CD4-positive, alpha-beta memory T cell (primary cell): ENCODE measurements at regions of chr19 and their contacts with region 1.

Region 1: GRCh38 chr19:57410877-57411671 is at the start of gene ZNF17:
- DNase-seq: peak; percentile 85 to 95 (median 90)
- H3K4me3 ChIP-seq: peak within 1 kb of the TSS; percentile 49 to 90
- H3K4me3 Mint-ChIP-seq: peak within 1 kb of the TSS; percentile 92 to 97 (median 96)
- H3K27ac ChIP-seq: peak within 1 kb of the TSS; percentile 73
- H3K27ac Mint-ChIP-seq: peak within 1 kb of the TSS; percentile 79 to 95 (median 94)
- H3K4me1 ChIP-seq: peaks cover 16% of the 10 kb centered on the region
- H3K4me1 Mint-ChIP-seq: peaks cover 23 to 42% (median 29%) of the 10 kb centered on the region in 4 donors
- H3K27me3 ChIP-seq: no peaks in the 10 kb centered on the region
- H3K27me3 Mint-ChIP-seq: no peaks in the 10 kb centered on the region
- total RNA-seq, gene ZNF17: 28.3 to 29.9 TPM

Region 2: GRCh38 chr19:57191141-57192076 is 219.7 kb before region 1 on chr19 and contains the start of gene ZNF264:
- CTCF ChIA-PET with region 1: no interaction called
- POLR2A ChIA-PET with region 1: no interaction called
- intact Hi-C with region 1: no loop called
- DNase-seq: peak; percentile 88 to 90 (median 88)
- H3K4me3 ChIP-seq: peak within 1 kb of the TSS; percentile 57 to 73
- H3K4me3 Mint-ChIP-seq: peak within 1 kb of the TSS; percentile 91 to 94 (median 93)
- H3K27ac ChIP-seq: peak within 1 kb of the TSS; percentile 77
- H3K27ac Mint-ChIP-seq: peak within 1 kb of the TSS; percentile 94 to 98 (median 96)
- H3K4me1 ChIP-seq: peaks cover 23% of the 10 kb centered on the region
- H3K4me1 Mint-ChIP-seq: peaks cover 19 to 54% (median 36%) of the 10 kb centered on the region in 4 donors
- H3K27me3 ChIP-seq: no peaks in the 10 kb centered on the region
- H3K27me3 Mint-ChIP-seq: peaks cover 6 to 7% of the 10 kb centered on the region in 2 donors
- total RNA-seq, gene ZNF264: 62.5 to 64.1 TPM

Region 3: GRCh38 chr19:57362997-57363705 is 47.9 kb before region 1 on chr19 and contains the starts of genes TRAPPC2B and ZNF547:
- CTCF ChIA-PET with region 1: interaction called, 3 read pairs
- POLR2A ChIA-PET with region 1: no interaction called
- intact Hi-C with region 1: loop called (anchors 1 kb)
- DNase-seq: peak; percentile 97 to 99 (median 99)
- H3K4me3 ChIP-seq: peak within 1 kb of the TSS; percentile 51 to 70
- H3K4me3 Mint-ChIP-seq: peak within 1 kb of the TSS; percentile 92 to 97 (median 94)
- H3K27ac ChIP-seq: peak within 1 kb of the TSS; percentile 76
- H3K27ac Mint-ChIP-seq: peak within 1 kb of the TSS; percentile 97 to 99 (median 99)
- H3K4me1 ChIP-seq: peaks cover 12% of the 10 kb centered on the region
- H3K4me1 Mint-ChIP-seq: peaks cover 12 to 18% (median 16%) of the 10 kb centered on the region in 4 donors
- H3K27me3 ChIP-seq: no peaks in the 10 kb centered on the region
- H3K27me3 Mint-ChIP-seq: peaks cover 0 to 2% of the 10 kb centered on the region in 2 donors
- total RNA-seq, gene TRAPPC2B: 11.0 to 12.1 TPM
- total RNA-seq, gene ZNF547: 6.5 to 10.8 TPM

Region 4: DNA sequence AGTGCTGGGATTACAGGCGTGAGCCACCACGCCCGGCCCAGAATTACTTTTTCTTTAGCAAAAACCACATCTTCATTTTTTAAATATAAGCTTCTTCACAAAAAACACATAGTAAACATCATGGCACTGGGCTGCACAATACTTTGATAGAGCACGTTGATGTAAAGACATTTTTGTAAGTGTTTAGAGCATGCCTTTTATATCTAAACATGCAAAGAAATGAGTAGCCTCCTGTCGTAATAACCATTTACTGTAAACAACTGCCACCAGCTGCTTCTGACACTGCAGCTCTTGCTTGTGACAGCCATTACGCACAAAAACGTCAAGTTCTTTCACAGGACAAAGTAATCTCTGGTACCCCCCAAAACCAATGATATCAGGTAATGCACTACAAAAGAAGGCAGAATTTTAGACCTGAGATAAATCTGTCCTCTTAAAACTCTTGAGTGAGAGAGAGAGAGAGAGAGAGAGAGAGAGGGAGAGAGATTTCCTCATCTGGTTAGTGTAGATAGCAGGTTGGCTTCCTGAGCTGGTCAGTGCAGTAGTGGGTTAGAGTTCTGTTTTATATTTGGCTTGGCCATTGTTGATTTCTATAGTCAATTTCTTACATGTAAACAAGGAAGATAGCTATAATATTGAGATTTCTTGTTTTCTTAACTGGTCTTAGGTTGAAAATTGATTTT is 28.1 kb before region 1 on chr19:
- CTCF ChIA-PET with region 1: no interaction called
- POLR2A ChIA-PET with region 1: no interaction called
- intact Hi-C with region 1: no loop called
- DNase-seq: no peak
- H3K4me3 ChIP-seq: no peak overlapping the region
- H3K4me3 Mint-ChIP-seq: no peak overlapping the region
- H3K27ac ChIP-seq: no peak overlapping the region
- H3K27ac Mint-ChIP-seq: no peak overlapping the region
- H3K4me1 ChIP-seq: no peaks in the 10 kb centered on the region
- H3K4me1 Mint-ChIP-seq: no peaks in the 10 kb centered on the region
- H3K27me3 ChIP-seq: no peaks in the 10 kb centered on the region
- H3K27me3 Mint-ChIP-seq: peaks cover 0 to 1% of the 10 kb centered on the region in 2 donors

Region 5: DNA sequence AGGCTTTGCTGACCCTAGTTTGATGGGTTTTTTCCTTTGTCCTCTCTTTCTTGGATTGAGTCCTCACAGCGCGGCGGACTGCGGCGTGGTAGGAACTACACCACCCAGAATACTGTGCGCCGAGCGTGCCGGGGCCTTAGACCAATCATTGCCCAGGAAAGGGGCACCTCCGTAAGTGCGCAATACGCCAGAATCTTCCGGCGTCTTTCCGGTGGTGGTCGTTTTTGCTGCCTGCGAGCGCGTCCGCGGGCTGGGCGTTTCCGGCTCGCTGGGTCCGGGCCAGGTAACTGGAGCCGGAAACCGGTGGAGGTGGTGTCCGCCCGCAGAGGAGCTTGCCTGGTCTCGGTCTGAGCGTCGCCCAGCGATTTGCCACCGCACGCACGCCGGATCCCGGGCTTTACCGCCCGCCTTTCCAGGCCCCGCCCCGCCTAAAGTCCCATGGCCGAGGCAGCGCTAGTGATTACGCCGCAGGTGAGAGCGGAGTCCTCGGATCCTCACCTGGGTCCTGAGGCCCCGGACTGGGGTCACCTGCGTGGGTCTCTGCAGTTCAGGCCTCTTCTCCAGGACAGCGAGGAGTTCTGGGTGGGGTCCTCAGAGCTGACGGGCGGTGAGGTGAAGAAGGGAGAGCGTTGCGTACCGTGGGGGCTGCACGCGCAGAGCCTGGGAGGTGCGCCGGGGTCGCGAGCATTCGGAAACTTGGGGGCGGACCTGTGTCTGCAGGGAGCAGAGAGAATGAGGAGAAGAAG is 116.2 kb after region 1 on chr19 and contains the start of gene ZNF549:
- CTCF ChIA-PET with region 1: no interaction called
- POLR2A ChIA-PET with region 1: no interaction called
- intact Hi-C with region 1: loop called (anchors 1 kb)
- DNase-seq: peak; percentile 88 to 93 (median 90)
- H3K4me3 ChIP-seq: peak within 1 kb of the TSS; percentile 15 to 99
- H3K4me3 Mint-ChIP-seq: peak within 1 kb of the TSS; percentile 86 to 98 (median 92)
- H3K27ac ChIP-seq: peak within 1 kb of the TSS; percentile 79
- H3K27ac Mint-ChIP-seq: peak within 1 kb of the TSS; percentile 86 to 97 (median 92)
- H3K4me1 ChIP-seq: peaks cover 16% of the 10 kb centered on the region
- H3K4me1 Mint-ChIP-seq: peaks cover 16 to 31% (median 22%) of the 10 kb centered on the region in 4 donors
- H3K27me3 ChIP-seq: no peaks in the 10 kb centered on the region
- H3K27me3 Mint-ChIP-seq: peaks cover 0 to 4% of the 10 kb centered on the region in 2 donors
- total RNA-seq, gene ZNF549: 20.5 to 21.8 TPM

Region 6: DNA sequence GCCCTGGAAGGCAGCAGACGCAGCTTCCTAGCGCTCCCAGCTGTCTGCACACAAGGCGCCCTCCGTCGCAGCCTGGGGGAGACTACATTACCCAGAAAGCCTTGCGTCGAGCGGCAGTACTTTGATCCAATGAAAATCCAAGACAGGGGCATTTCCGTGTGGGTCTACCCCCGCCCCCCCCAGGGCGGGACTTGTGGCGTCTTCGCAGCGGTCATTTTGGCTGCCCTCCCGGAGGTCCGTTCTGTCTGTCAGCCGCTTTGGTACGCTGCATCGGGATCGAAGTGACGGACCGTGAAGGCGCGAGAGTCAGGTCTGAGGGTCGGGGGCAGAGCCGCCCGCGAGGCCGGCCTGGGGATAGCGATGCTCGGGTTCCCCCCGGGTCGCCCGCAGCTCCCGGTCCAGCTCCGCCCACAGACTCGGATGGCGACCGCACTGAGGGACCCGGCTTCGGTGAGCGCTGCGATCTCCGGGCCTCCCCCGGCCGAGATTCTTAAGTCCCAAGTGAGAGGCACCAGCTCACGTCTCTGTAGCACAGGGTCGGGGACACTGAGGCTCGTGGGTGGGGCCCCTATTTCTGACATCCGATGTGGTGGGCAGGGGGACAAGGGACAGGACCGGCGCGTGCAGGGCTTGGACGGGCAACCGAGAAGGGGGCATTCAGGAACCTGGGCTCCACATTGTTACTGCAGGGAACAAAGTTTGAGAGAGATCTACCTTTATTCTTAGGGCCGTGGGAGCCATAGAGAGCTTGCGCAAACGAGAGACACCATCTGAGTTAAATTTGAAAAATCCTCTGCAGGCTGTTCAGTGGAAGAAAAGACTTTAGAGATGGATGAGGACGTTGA is 222.1 kb after region 1 on chr19 and contains the start of gene ZNF211:
- CTCF ChIA-PET with region 1: no interaction called
- POLR2A ChIA-PET with region 1: no interaction called
- intact Hi-C with region 1: loop called (anchors 1 kb)
- DNase-seq: peak; percentile 86 to 91 (median 88)
- H3K4me3 ChIP-seq: peak within 1 kb of the TSS; percentile 84 to 87
- H3K4me3 Mint-ChIP-seq: peak within 1 kb of the TSS; percentile 94 to 98 (median 96)
- H3K27ac ChIP-seq: peak within 1 kb of the TSS; percentile 81
- H3K27ac Mint-ChIP-seq: peak within 1 kb of the TSS; percentile 83 to 96 (median 94)
- H3K4me1 ChIP-seq: peaks cover 19% of the 10 kb centered on the region
- H3K4me1 Mint-ChIP-seq: peaks cover 18 to 35% (median 27%) of the 10 kb centered on the region in 4 donors
- H3K27me3 ChIP-seq: no peaks in the 10 kb centered on the region
- H3K27me3 Mint-ChIP-seq: no peaks in the 10 kb centered on the region
- total RNA-seq, gene ZNF211: 48.7 to 53.3 TPM

Region 7: DNA sequence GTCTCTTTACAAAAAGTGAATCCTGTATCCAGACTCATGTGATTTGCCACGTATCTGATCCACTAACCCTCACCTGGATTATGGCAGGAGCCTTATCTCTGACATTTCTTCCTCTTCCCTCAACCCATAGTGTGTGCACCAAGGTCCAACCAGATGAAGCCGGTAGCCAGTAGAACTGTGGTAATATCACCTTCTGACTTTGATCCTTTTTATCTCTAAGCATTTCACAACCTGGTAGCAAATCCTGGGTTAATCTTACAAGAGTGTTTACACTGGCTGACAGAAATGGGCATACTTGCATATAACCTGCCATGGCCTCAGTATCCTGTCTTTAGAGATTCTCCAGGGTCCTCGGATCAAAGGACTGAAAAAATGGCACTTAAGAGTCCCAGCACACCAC is 503.5 kb after region 1 on chr19:
- CTCF ChIA-PET with region 1: no interaction called
- POLR2A ChIA-PET with region 1: no interaction called
- intact Hi-C with region 1: loop called (anchors 1 kb)
- DNase-seq: no peak
- H3K4me3 ChIP-seq: no peak overlapping the region
- H3K4me3 Mint-ChIP-seq: peak overlapping the region; percentile 53 to 99 (median 97)
- H3K27ac ChIP-seq: no peak overlapping the region
- H3K27ac Mint-ChIP-seq: peak overlapping the region in 6 of 7 donors; percentile 5 to 96 (median 34)
- H3K4me1 ChIP-seq: peaks cover 13% of the 10 kb centered on the region
- H3K4me1 Mint-ChIP-seq: peaks cover 22 to 48% (median 34%) of the 10 kb centered on the region in 4 donors
- H3K27me3 ChIP-seq: no peaks in the 10 kb centered on the region
- H3K27me3 Mint-ChIP-seq: no peaks in the 10 kb centered on the region